HEK293 (cell line): ENCODE measurements at regions of chr6 and their contacts with region 1.

Region 1: GRCh38 chr6:159252955-159253508 is 83.8 kb downstream of the FNDC1 start:
- H3K4me3 ChIP-seq: no peak overlapping the region
- H3K27ac ChIP-seq: no peak overlapping the region
- H3K4me1 ChIP-seq: no peaks in the 10 kb centered on the region
- CTCF ChIP-seq: peak; percentile 43; the same call in 1 of the 2 replicates

Region 2: DNA sequence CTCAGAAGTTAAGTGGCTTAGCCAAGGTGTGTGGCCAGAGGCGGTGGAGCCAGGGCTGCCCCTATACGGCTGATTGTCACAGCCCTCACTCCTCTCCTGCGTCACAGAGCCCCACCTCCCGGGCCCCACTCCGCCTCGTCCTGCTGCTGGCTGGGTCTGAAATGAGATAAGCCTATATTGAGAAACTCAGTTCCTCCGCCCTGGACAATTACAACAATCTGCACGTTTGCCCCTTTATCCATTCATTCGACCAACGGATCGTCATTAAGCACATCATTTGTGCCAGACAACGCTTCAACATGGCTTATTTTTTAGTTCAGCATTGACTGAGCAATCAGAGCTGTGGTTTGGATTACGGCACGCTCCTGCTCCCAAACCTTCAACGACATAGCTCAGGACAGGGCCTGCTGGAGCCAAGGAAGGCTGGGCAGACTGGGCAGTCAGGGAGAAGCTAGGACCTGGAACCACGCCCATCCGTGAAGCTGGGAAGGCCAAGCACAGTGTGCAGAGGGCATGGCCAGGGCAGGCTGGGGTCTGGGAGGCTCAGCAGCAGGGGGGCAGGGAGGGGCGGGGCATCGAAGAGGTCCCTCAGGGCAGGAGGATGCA is 417.3 kb before region 1 on chr6:
- CTCF ChIA-PET with region 1: no interaction called
- POLR2A ChIA-PET with region 1: no interaction called
- H3K4me3 ChIP-seq: no peak overlapping the region
- H3K27ac ChIP-seq: no peak overlapping the region
- H3K4me1 ChIP-seq: no peaks in the 10 kb centered on the region
- CTCF ChIP-seq: no peak

Region 3: DNA sequence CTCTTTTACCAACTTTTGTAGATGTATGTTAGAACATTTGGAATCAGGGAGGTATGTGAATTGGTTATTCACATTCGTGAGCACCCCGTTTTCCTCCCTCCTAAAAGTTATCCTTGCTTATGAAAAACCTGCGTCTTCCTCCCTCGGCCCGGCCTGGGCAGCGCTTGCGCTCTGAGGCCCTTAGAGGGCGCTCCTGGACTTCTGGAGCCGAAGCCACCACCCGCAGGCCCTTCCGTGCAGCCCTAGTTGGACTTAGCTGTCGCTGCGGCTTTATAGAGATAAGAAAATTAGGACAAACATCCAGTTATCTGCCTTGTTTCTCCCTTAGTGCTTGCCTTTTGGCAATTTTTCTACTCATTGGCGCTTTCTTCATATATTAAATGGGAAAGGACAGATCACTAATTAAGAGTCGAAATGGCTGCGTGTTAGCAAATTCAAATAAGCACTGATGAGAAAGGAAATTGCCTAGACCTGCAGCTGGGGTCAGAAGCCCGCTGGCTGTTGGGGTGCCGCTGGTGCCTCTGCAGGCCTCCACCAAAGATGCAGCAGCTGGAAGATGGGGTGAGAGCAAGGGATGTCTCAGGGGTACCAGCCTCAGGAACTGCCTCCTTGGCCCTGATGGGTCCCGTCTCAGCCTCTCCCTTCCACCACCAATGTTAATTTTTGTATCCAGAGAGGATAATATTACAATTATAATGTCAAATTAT is 78.6 kb before region 1 on chr6:
- CTCF ChIA-PET with region 1: interaction called, 11 read pairs
- POLR2A ChIA-PET with region 1: no interaction called
- H3K4me3 ChIP-seq: no peak overlapping the region
- H3K27ac ChIP-seq: no peak overlapping the region
- H3K4me1 ChIP-seq: no peaks in the 10 kb centered on the region
- CTCF ChIP-seq: peak; percentile 57; the same call in 1 of the 2 replicates

Region 4: DNA sequence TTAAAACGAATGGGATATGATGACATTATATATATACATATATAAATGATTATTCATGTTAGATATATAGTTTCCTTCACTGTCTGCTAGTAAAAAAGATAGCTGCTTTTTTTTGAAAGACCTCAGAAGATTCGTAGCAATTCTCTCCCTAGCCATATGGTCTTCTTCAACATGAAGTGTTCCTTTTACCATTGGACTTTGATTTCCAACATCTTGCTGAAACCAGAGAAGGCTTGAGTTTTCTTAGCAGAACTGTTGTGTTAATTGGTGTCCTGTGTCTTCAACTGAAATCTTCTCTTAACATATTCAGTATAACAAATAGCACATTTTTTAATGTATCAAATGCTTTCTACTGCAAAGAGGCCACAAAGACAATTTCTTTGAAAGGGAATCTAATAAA is 28.6 kb before region 1 on chr6:
- CTCF ChIA-PET with region 1: interaction called, 10 read pairs
- POLR2A ChIA-PET with region 1: no interaction called
- H3K4me3 ChIP-seq: no peak overlapping the region
- H3K27ac ChIP-seq: no peak overlapping the region
- H3K4me1 ChIP-seq: no peaks in the 10 kb centered on the region
- CTCF ChIP-seq: no peak

Region 5: DNA sequence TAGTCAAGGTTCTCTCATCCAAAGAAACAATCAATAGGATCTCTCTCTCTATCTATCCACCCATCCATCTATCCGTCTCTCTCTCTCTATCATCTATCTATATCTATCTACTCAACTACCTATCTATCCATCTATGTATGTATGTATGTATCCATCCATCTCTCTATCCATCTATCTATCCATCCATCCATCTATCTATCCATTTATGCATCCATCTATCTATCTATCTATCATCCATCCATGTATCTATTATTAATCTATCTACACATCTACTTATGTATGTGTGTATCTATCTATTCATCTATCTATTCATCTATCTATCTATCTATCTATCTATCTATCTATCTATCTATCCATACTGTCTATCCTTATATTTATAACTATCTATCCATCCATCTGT is 15.5 kb after region 1 on chr6:
- CTCF ChIA-PET with region 1: interaction called, 13 read pairs
- POLR2A ChIA-PET with region 1: no interaction called
- H3K4me3 ChIP-seq: no peak overlapping the region
- H3K27ac ChIP-seq: no peak overlapping the region
- H3K4me1 ChIP-seq: no peaks in the 10 kb centered on the region
- CTCF ChIP-seq: no peak

Region 6: GRCh38 chr6:159372333-159372732 is 119.3 kb after region 1 on chr6:
- CTCF ChIA-PET with region 1: no interaction called
- POLR2A ChIA-PET with region 1: no interaction called
- H3K4me3 ChIP-seq: no peak overlapping the region
- H3K27ac ChIP-seq: no peak overlapping the region
- H3K4me1 ChIP-seq: no peaks in the 10 kb centered on the region
- CTCF ChIP-seq: no peak

Region 7: DNA sequence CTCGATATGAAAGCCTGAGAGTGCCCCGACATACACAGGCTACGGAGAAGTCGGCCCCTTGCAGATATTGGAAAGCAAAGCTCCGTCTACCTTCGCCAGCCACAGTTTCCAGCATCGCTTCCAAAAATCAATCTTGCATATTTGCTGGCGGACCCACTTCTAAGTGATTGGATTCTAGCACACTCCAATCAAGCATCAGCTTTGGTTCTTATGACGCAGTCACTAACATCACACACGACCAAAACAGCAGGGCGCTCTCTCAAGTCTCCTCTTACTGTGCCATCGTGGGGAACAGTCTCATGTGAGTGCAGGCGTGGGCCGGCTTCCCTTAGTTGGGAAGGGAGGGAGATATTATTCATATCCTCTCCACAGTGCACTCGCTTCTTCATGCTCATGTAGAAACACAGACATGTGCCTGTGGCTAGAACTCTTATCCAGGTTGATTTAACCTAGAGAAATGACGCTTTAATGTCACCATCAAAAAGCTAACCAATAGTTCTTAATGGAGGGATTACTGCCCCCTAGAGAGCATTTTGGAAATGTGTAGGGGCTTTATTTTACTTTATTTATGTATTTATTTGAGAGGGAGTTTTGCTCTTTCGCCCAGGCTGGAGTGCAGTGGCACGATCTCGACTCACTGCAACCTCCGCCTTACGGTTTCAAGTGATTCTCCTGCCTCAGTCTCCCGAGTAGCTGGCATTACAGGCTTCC is 210.2 kb after region 1 on chr6:
- CTCF ChIA-PET with region 1: interaction called, 15 read pairs
- POLR2A ChIA-PET with region 1: no interaction called
- H3K4me3 ChIP-seq: no peak overlapping the region
- H3K27ac ChIP-seq: no peak overlapping the region
- H3K4me1 ChIP-seq: peaks cover 5% of the 10 kb centered on the region; the same call in 1 of the 2 replicates
- CTCF ChIP-seq: no peak